ENCODE measurements at regions of chr19 and their contacts with region 1.

Region 1: DNA sequence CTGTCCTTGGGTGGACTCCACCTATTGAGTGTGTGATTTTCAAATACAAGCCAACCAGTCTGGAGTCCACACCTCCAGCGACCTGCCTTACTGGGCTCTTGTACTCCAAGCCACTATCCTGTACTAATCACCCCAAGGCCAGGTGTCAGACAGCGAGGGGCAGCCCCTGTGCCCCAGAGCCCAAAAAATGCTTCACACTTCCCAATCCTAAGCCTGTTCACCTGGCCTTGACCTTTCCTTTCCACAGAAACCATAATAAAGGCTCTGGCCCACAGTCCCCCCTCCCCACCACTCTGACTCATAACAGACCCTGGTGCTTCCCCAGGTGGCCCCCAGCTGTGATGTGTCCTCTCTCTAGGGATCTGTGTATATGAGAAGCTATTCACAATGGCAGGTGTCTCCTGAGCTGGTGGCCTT is 3.9 kb downstream of the CD209 start:
- DNase-seq: peak; percentile 64
- ATAC-seq: peak; percentile 94
- H3K4me3 Mint-ChIP-seq: peak overlapping the region; percentile 45
- H3K27ac Mint-ChIP-seq: peak overlapping the region; percentile 77
- H3K4me1 Mint-ChIP-seq: peaks cover 57% of the 10 kb centered on the region
- H3K27me3 Mint-ChIP-seq: peaks cover 8% of the 10 kb centered on the region
- CTCF ChIP-seq: no peak

Region 2: DNA sequence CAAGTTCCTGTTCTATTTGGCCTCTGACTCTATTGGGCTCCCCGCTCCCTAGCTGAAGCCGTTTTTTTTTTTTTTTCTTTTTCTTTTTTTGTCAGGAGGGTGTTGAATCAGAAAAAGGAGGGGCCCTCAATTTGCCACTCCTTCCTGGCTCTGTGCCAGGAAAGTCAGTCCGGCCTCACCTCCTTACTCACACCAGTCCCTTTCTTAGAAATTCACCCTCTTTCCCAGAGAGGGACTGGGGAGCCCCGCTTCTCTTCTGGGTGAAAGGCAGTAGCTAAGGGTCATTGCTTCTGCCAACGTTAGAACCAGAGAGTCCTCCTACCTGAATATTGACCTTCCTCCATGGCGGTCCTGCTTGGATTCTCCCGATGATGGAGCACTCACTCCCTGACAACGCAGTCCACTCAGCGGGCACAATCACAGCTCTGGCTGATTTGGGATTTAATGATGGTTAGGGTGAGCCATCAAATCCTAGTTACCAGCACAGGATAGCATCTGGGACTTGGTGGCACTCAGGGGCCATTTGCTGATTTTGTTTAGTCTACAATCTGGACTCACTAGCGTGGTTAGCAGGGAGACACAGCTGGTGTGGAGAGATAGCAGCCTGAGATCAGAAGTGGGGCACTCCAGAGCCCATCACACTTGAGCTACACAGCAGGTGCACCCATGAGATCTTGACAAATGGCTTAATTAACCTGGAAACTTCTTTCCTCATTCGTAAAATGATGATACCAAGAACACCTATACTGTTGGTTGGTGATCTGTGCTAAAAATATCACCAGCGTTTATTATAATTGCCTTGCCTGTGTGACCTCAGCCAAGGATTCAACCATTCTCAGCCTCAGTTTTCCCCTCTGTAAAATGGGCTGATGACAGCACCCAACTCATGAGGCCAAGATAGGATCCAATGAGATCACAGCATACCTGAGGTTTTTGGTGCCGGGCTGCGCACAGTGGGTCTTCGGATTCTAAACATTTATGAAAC is 43.7 kb before region 1 on chr19:
- CTCF ChIA-PET with region 1: interaction called, 6 read pairs
- POLR2A ChIA-PET with region 1: interaction called, 41 read pairs
- intact Hi-C with region 1: no loop called
- DNase-seq: no peak
- ATAC-seq: no peak
- H3K4me3 Mint-ChIP-seq: peak overlapping the region; percentile 84
- H3K27ac Mint-ChIP-seq: peak overlapping the region; percentile 97
- H3K4me1 Mint-ChIP-seq: peaks cover 99% of the 10 kb centered on the region
- H3K27me3 Mint-ChIP-seq: no peaks in the 10 kb centered on the region
- CTCF ChIP-seq: no peak

Region 3: GRCh38 chr19:7722231-7722651 is 21.2 kb before region 1 on chr19:
- CTCF ChIA-PET with region 1: interaction called, 3 read pairs
- POLR2A ChIA-PET with region 1: interaction called, 12 read pairs
- intact Hi-C with region 1: loop called (anchors 2 kb)
- DNase-seq: no peak
- ATAC-seq: peak; percentile 67
- H3K4me3 Mint-ChIP-seq: no peak overlapping the region
- H3K27ac Mint-ChIP-seq: peak overlapping the region; percentile 30
- H3K4me1 Mint-ChIP-seq: peaks cover 35% of the 10 kb centered on the region
- H3K27me3 Mint-ChIP-seq: peaks cover under 1% of the 10 kb centered on the region
- CTCF ChIP-seq: no peak

Region 4: DNA sequence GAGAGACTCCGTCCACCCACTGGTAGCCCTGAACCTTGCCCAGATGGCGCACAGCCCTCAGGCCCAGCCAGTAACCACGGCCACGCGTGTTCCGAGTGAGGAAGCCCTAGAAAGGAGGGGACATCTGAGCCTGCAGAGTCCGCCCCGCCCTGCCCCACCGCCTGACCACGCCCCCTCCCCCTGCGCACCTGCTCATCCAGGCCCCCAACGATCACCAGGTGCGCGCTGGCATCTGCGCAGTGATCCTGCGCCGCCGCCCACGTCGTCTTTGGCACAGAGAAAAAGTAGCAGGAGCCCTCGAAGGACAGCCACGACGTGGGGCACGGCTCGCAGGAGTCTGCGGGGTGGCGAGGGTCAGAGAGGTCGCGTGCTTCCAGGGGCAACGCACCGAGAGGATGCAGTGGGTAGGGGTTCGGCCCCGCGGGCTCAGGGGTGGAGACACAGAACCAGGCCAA is 13.6 kb before region 1 on chr19:
- CTCF ChIA-PET with region 1: no interaction called
- POLR2A ChIA-PET with region 1: interaction called, 6 read pairs
- intact Hi-C with region 1: loop called (anchors 1 kb)
- DNase-seq: no peak
- ATAC-seq: peak; percentile 40
- H3K4me3 Mint-ChIP-seq: peak overlapping the region; percentile 70
- H3K27ac Mint-ChIP-seq: no peak overlapping the region
- H3K4me1 Mint-ChIP-seq: peaks cover 38% of the 10 kb centered on the region
- H3K27me3 Mint-ChIP-seq: peaks cover 28% of the 10 kb centered on the region
- CTCF ChIP-seq: no peak

Region 5: GRCh38 chr19:7808133-7808532 is 64.7 kb after region 1 on chr19:
- CTCF ChIA-PET with region 1: no interaction called
- POLR2A ChIA-PET with region 1: interaction called, 13 read pairs
- intact Hi-C with region 1: no loop called
- DNase-seq: no peak
- ATAC-seq: no peak
- H3K4me3 Mint-ChIP-seq: no peak overlapping the region
- H3K27ac Mint-ChIP-seq: peak overlapping the region; percentile 51
- H3K4me1 Mint-ChIP-seq: peaks cover 19% of the 10 kb centered on the region
- H3K27me3 Mint-ChIP-seq: peaks cover 5% of the 10 kb centered on the region
- CTCF ChIP-seq: no peak

Measured in activated B cell treated with CpG ODN at 0.5 μM for 24 hours (primary cell).